Panc1 (cell line): ENCODE measurements at regions of chr5 and their contacts with region 1.

Region 1: GRCh38 chr5:16160706-16161105 is 18.9 kb downstream of the MARCHF11 start:
- DNase-seq: peak; percentile 51
- ATAC-seq: peak; percentile 96
- H3K4me3 ChIP-seq: no peak overlapping the region
- H3K27ac ChIP-seq: no peak overlapping the region
- H3K4me1 ChIP-seq: no peaks in the 10 kb centered on the region
- H3K27me3 ChIP-seq: no peaks in the 10 kb centered on the region
- CTCF ChIP-seq: peak; percentile 75

Region 2: GRCh38 chr5:15550502-15551112 is 610.1 kb before region 1 on chr5:
- CTCF ChIA-PET with region 1: no interaction called
- POLR2A ChIA-PET with region 1: no interaction called
- in situ Hi-C with region 1: no loop called
- intact Hi-C with region 1: no loop called
- DNase-seq: no peak
- ATAC-seq: no peak
- H3K4me3 ChIP-seq: no peak overlapping the region
- H3K27ac ChIP-seq: no peak overlapping the region
- H3K4me1 ChIP-seq: no peaks in the 10 kb centered on the region
- H3K27me3 ChIP-seq: no peaks in the 10 kb centered on the region
- CTCF ChIP-seq: no peak

Region 3: GRCh38 chr5:15821506-15821905 is 339.2 kb before region 1 on chr5:
- CTCF ChIA-PET with region 1: no interaction called
- POLR2A ChIA-PET with region 1: no interaction called
- in situ Hi-C with region 1: no loop called
- intact Hi-C with region 1: no loop called
- DNase-seq: no peak
- ATAC-seq: no peak
- H3K4me3 ChIP-seq: no peak overlapping the region
- H3K27ac ChIP-seq: no peak overlapping the region
- H3K4me1 ChIP-seq: no peaks in the 10 kb centered on the region
- H3K27me3 ChIP-seq: no peaks in the 10 kb centered on the region
- CTCF ChIP-seq: no peak

Region 4: DNA sequence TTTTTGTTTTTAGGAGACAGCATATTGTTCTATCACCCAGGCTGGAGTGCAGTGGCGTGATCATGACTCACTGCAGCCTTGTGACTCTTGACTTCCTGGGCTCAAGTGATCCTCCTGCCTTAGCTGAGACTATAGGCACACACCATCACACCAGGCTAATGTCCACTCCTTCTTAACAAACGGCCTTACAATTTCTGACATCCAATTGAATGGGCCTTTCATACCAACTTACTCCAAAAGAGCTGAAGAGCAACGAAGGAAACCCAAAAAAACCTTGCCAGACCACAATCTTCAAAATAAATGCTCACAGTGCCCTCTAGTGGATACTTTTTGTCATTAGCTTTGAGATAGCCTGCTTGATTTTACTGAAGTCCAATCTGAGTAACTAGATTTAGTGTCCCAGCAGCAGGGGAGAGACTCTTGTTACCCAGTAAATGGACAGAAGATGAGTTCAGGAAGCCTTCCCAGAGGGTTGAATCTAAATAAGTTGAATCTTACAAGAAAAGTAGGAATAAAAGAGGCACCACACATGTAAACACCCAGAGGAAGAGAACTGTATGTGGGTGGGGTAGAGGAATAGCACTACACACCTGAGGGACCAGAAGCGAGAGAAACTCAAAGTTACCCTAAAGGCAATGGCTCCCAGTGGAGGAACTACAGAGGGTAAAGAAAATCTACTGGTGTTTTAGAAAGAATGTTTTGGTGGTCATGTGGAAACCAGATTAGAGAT is 295.6 kb after region 1 on chr5:
- CTCF ChIA-PET with region 1: interaction called, 19 read pairs
- POLR2A ChIA-PET with region 1: no interaction called
- in situ Hi-C with region 1: no loop called
- intact Hi-C with region 1: loop called (anchors 1 kb)
- DNase-seq: peak; percentile 69
- ATAC-seq: peak; percentile 80
- H3K4me3 ChIP-seq: no peak overlapping the region
- H3K27ac ChIP-seq: no peak overlapping the region; the same call in 1 of the 2 replicates
- H3K4me1 ChIP-seq: 0 out of 2 replicates have a peak, but pooled peaks cover 3% of the 10 kb centered on the region
- H3K27me3 ChIP-seq: no peaks in the 10 kb centered on the region
- CTCF ChIP-seq: peak; percentile 81